Upper lobe of right lung (tissue), 1 donor: ENCODE measurements at regions of chr2 and their contacts with region 1.

Region 1: GRCh38 chr2:88059979-88060906 is 4.7 kb upstream of the KRCC1 start:
- DNase-seq: no peak
- ATAC-seq: peak; percentile 50
- H3K4me3 ChIP-seq: no peak overlapping the region
- H3K27ac ChIP-seq: no peak overlapping the region
- H3K4me1 ChIP-seq: no peaks in the 10 kb centered on the region
- H3K27me3 ChIP-seq: no peaks in the 10 kb centered on the region
- CTCF ChIP-seq: peak; percentile 79

Region 2: GRCh38 chr2:88159955-88160415 is 99.7 kb after region 1 on chr2:
- intact Hi-C with region 1: loop called (anchors 10 kb)
- DNase-seq: no peak
- ATAC-seq: peak; percentile 93
- H3K4me3 ChIP-seq: no peak overlapping the region
- H3K27ac ChIP-seq: no peak overlapping the region
- H3K4me1 ChIP-seq: no peaks in the 10 kb centered on the region
- H3K27me3 ChIP-seq: no peaks in the 10 kb centered on the region
- CTCF ChIP-seq: peak; percentile 90

Region 3: GRCh38 chr2:88187038-88187676 is 126.9 kb after region 1 on chr2:
- intact Hi-C with region 1: no loop called
- DNase-seq: no peak
- ATAC-seq: peak; percentile 58
- H3K4me3 ChIP-seq: no peak overlapping the region
- H3K27ac ChIP-seq: no peak overlapping the region
- H3K4me1 ChIP-seq: no peaks in the 10 kb centered on the region
- H3K27me3 ChIP-seq: no peaks in the 10 kb centered on the region
- CTCF ChIP-seq: peak; percentile 53

Region 4: DNA sequence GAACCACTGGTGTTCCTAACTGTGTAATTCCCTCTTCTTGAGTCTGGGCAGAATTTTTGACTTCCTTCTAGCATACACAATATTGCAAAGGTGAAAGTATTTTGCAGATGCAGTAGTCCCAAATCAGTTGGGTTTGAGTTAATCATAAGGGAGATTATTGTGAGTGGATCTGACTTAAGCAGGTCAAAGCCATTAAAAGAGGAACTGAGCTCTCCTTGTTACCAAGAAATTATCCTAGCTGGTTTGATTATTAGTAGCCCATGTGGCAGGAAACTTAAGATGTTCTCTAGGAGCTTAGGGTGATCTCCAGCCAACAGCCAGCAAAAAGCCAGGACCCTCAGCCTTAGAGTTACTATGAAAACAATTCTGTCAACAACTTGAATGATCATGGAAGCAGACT is 853.0 kb after region 1 on chr2:
- intact Hi-C with region 1: no loop called
- DNase-seq: no peak
- ATAC-seq: no peak
- H3K4me3 ChIP-seq: no peak overlapping the region
- H3K27ac ChIP-seq: no peak overlapping the region
- H3K4me1 ChIP-seq: no peaks in the 10 kb centered on the region
- H3K27me3 ChIP-seq: peaks cover 4% of the 10 kb centered on the region
- CTCF ChIP-seq: no peak

Region 5: GRCh38 chr2:88959480-88960220 is 899.4 kb after region 1 on chr2:
- intact Hi-C with region 1: no loop called
- DNase-seq: no peak
- ATAC-seq: no peak
- H3K4me3 ChIP-seq: no peak overlapping the region
- H3K27ac ChIP-seq: no peak overlapping the region
- H3K4me1 ChIP-seq: no peaks in the 10 kb centered on the region
- H3K27me3 ChIP-seq: peaks cover 8% of the 10 kb centered on the region
- CTCF ChIP-seq: peak; percentile 10